ENCODE measurements at regions of chr3 and their contacts with region 1.

Region 1: GRCh38 chr3:10816019-10816862 is at the start of gene SLC6A11:
- DNase-seq: peak; percentile 39
- H3K4me3 ChIP-seq: peak within 1 kb of the TSS; percentile 39 to 52 (median 52)
- H3K27ac ChIP-seq: no peak within 1 kb of the TSS
- H3K4me1 ChIP-seq: peaks cover 16% of the 10 kb centered on the region
- H3K27me3 ChIP-seq: no peaks in the 10 kb centered on the region
- CTCF ChIP-seq: no peak
- total RNA-seq, gene SLC6A11: 2.5 to 7.8 TPM

Region 2: DNA sequence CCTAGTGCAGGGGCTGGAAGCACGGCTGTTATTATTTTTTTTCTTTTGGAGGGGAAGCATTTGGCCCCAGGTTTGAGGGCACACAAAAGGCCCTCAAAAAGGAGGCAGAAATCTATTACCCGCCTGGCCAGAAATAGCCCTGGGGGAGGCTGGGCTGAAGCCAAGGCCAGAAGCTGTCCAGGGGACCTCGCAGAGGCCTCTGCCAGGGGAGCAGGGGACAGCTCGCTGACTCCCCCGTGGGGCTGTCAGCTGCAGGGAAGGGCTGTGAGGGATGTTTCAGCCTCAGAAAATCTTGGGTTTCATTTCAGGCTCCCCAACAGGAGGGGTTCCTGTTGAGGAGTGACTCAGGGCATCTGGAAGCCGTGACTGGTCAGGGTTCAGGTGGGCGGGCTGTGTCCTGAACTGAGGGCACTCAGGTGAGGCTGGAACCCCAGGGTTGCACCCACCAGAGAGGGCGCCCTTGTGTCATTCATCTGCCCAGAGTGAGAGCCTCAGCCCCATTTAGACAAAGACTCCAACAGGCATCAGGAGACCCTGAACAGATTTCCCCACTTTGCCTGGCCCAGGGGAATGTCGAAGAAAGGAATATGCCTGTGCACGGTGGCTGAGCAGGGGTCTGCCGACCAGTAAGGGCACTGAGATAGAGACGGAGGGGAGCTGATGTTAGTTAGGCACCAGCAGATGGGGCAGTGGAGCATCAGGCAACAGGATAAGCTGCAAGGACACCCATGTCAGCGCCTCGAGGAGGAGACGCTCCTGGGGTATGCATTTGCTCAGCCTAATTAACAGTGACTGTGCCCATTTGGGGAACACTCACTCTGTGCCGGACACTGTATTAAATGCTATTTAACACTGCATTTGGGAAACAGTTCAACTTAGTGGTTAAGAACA is 43.7 kb before region 1 on chr3:
- CTCF ChIA-PET with region 1: no interaction called
- dilution Hi-C with region 1: no loop called
- in situ Hi-C with region 1: no loop called
- intact Hi-C with region 1: loop called (anchors 2 kb)
- DNase-seq: peak; percentile 81
- H3K4me3 ChIP-seq: no peak overlapping the region
- H3K27ac ChIP-seq: peak overlapping the region; percentile 86
- H3K4me1 ChIP-seq: peaks cover 26% of the 10 kb centered on the region
- H3K27me3 ChIP-seq: no peaks in the 10 kb centered on the region
- CTCF ChIP-seq: peak; percentile 53 to 75